Panc1 (cell line): ENCODE measurements at regions of chr3 and their contacts with region 1.

Region 1: GRCh38 chr3:119469381-119470189 is 822 bp downstream of the POGLUT1 start:
- DNase-seq: no peak
- ATAC-seq: no peak; the same call in 1 of the 2 replicates
- H3K4me3 ChIP-seq: peak overlapping the region; percentile 77 to 93
- H3K27ac ChIP-seq: peak overlapping the region; percentile 89
- H3K4me1 ChIP-seq: peaks cover 10% of the 10 kb centered on the region
- H3K27me3 ChIP-seq: no peaks in the 10 kb centered on the region
- CTCF ChIP-seq: peak; percentile 24; the same call in 1 of the 2 replicates

Region 2: GRCh38 chr3:119641416-119641815 is 171.8 kb after region 1 on chr3:
- CTCF ChIA-PET with region 1: no interaction called
- POLR2A ChIA-PET with region 1: interaction called, 15 read pairs
- in situ Hi-C with region 1: no loop called
- intact Hi-C with region 1: no loop called
- DNase-seq: no peak
- ATAC-seq: no peak
- H3K4me3 ChIP-seq: no peak overlapping the region
- H3K27ac ChIP-seq: no peak overlapping the region
- H3K4me1 ChIP-seq: 0 out of 2 replicates have a peak, but pooled peaks cover 5% of the 10 kb centered on the region
- H3K27me3 ChIP-seq: no peaks in the 10 kb centered on the region
- CTCF ChIP-seq: no peak